Ascending aorta (tissue), 2 donors: ENCODE measurements at regions of chr13 and their contacts with region 1.

Region 1: GRCh38 chr13:106373989-106374572 is 161.4 kb downstream of the EFNB2 start:
- DNase-seq: no peak
- H3K4me3 ChIP-seq: no peak overlapping the region
- H3K27ac ChIP-seq: peak overlapping the region; percentile 65 to 75
- H3K4me1 ChIP-seq: peaks cover 5 to 19% of the 10 kb centered on the region in 2 donors
- H3K27me3 ChIP-seq: no peaks in the 10 kb centered on the region
- CTCF ChIP-seq: no peak

Region 2: DNA sequence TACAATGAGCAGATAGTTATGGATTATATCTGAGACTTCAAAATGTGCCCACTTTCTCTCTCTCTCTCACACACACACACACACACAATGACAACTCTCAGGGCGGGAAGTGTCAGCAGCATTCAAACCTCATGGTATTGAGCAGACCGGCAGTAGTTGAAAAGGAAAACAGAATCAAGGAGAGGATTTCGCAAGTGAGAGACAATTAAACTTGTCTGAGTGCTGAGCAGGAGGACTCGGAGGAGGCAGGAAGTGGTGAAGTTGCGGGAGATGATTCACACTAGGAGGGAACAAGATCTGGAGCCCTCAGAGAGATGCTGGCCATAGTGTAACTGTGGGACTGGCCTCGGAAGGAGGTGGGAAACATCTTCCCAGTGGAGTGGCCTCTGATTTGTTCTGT is 191.7 kb before region 1 on chr13:
- intact Hi-C with region 1: no loop called
- DNase-seq: no peak
- H3K4me3 ChIP-seq: no peak overlapping the region
- H3K27ac ChIP-seq: no peak overlapping the region
- H3K4me1 ChIP-seq: no peaks in the 10 kb centered on the region
- H3K27me3 ChIP-seq: no peaks in the 10 kb centered on the region
- CTCF ChIP-seq: no peak

Region 3: GRCh38 chr13:106220211-106220610 is 153.9 kb before region 1 on chr13:
- intact Hi-C with region 1: no loop called
- DNase-seq: no peak
- H3K4me3 ChIP-seq: no peak overlapping the region
- H3K27ac ChIP-seq: no peak overlapping the region
- H3K4me1 ChIP-seq: no peaks in the 10 kb centered on the region
- H3K27me3 ChIP-seq: no peaks in the 10 kb centered on the region
- CTCF ChIP-seq: no peak

Region 4: DNA sequence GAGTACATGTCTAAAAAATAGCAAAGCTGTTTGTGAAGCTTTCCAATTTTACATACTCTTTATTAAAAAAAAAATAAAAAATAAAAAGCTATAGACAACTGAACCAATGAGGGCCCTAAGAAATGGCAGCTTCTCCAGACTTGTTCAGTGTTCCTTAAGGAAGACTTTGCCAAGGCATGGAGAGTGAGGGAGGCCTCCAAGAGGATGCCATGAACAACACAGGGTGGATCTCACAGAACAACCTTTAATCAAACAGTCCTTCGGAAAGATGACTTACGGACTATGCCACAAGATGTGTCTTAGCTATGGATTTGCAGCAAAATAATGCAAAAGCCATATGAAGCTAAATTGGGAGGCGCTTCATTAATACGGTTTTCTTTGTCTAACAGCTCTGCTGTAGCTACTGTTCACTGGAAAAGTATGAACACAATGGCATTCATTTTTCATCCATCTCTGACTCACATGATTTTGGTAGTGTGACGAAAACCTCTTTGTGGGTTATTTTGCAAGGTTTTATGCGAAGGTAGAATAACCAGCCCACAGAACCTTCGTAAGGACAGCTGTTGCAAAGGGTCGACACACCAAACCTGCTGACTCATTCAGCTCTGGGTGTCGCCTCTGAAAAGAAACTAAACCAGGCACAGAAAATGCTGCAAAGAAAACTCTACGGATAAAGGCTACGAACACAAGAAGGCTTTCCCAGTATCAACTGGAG is 133.6 kb after region 1 on chr13:
- intact Hi-C with region 1: loop called (anchors 10 kb)
- DNase-seq: no peak
- H3K4me3 ChIP-seq: peak overlapping the region; percentile 27 to 33
- H3K27ac ChIP-seq: peak overlapping the region; percentile 66
- H3K4me1 ChIP-seq: peaks cover 10 to 33% of the 10 kb centered on the region in 2 donors
- H3K27me3 ChIP-seq: no peaks in the 10 kb centered on the region
- CTCF ChIP-seq: no peak

Region 5: DNA sequence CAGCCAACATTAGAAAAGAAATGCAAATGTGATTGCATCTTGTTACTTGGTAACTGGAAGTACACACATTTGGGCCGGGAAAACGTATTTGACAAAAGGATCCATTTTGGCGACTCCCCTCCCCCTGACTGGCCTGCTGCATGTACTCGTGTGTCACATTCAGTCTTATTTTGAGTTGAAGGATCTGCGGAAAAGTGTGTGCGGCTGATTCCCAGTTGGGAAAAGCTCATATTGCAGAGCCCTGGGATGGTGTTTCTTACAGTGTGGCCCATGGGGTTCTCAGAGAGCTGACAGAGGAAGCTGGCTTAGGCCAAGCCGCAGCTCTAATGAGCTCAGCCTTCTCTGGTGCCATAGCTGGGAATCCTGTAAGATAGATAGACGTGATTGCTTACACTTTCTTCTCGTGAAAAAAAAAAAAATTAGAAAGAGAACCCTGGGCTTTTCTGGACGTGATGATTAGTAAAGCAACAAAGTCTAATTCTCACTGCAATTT is 364.2 kb after region 1 on chr13:
- intact Hi-C with region 1: no loop called
- DNase-seq: no peak
- H3K4me3 ChIP-seq: no peak overlapping the region
- H3K27ac ChIP-seq: no peak overlapping the region
- H3K4me1 ChIP-seq: no peaks in the 10 kb centered on the region
- H3K27me3 ChIP-seq: no peaks in the 10 kb centered on the region
- CTCF ChIP-seq: no peak